IMR-90 (cell line): ENCODE measurements at regions of chr1 and their contacts with region 1.

Region 1: GRCh38 chr1:26169669-26170471 is at the start of gene ZNF593:
- DNase-seq: peak; percentile 90
- ATAC-seq: peak; percentile 96
- H3K4me3 ChIP-seq: peak within 1 kb of the TSS; percentile 84
- H3K27ac ChIP-seq: peak within 1 kb of the TSS; percentile 66
- H3K4me1 ChIP-seq: peaks cover 5% of the 10 kb centered on the region; the same call in 1 of the 2 replicates
- H3K27me3 ChIP-seq: no peaks in the 10 kb centered on the region; the same call in 1 of the 2 replicates
- CTCF ChIP-seq: peak; percentile 98
- POLR2A ChIP-seq: peak; percentile 77
- RAD21 ChIP-seq: peak; percentile 55
- total RNA-seq, gene ZNF593: 22.2 and 22.8 TPM in 2 replicates

Region 2: GRCh38 chr1:26111530-26112406 is 58.1 kb before region 1 on chr1 and contains the start of gene PDIK1L:
- CTCF ChIA-PET with region 1: no interaction called
- POLR2A ChIA-PET with region 1: no interaction called
- dilution Hi-C with region 1: no loop called
- in situ Hi-C with region 1: no loop called
- intact Hi-C with region 1: no loop called
- DNase-seq: peak; percentile 96
- ATAC-seq: peak; percentile 89
- H3K4me3 ChIP-seq: peak within 1 kb of the TSS; percentile 98
- H3K27ac ChIP-seq: peak within 1 kb of the TSS; percentile 82
- H3K4me1 ChIP-seq: no peaks in the 10 kb centered on the region
- H3K27me3 ChIP-seq: no peaks in the 10 kb centered on the region
- CTCF ChIP-seq: no peak
- POLR2A ChIP-seq: no peak
- RAD21 ChIP-seq: no peak
- total RNA-seq, gene PDIK1L: 3.0 and 5.8 TPM in 2 replicates

Region 3: GRCh38 chr1:26132128-26132833 is 37.6 kb before region 1 on chr1:
- CTCF ChIA-PET with region 1: no interaction called
- POLR2A ChIA-PET with region 1: no interaction called
- dilution Hi-C with region 1: no loop called
- in situ Hi-C with region 1: no loop called
- intact Hi-C with region 1: no loop called
- DNase-seq: no peak
- ATAC-seq: no peak
- H3K4me3 ChIP-seq: no peak overlapping the region
- H3K27ac ChIP-seq: no peak overlapping the region
- H3K4me1 ChIP-seq: 0 out of 2 replicates have a peak, but pooled peaks cover under 1% of the 10 kb centered on the region
- H3K27me3 ChIP-seq: peaks cover 11% of the 10 kb centered on the region
- CTCF ChIP-seq: no peak
- POLR2A ChIP-seq: no peak
- RAD21 ChIP-seq: no peak

Region 4: DNA sequence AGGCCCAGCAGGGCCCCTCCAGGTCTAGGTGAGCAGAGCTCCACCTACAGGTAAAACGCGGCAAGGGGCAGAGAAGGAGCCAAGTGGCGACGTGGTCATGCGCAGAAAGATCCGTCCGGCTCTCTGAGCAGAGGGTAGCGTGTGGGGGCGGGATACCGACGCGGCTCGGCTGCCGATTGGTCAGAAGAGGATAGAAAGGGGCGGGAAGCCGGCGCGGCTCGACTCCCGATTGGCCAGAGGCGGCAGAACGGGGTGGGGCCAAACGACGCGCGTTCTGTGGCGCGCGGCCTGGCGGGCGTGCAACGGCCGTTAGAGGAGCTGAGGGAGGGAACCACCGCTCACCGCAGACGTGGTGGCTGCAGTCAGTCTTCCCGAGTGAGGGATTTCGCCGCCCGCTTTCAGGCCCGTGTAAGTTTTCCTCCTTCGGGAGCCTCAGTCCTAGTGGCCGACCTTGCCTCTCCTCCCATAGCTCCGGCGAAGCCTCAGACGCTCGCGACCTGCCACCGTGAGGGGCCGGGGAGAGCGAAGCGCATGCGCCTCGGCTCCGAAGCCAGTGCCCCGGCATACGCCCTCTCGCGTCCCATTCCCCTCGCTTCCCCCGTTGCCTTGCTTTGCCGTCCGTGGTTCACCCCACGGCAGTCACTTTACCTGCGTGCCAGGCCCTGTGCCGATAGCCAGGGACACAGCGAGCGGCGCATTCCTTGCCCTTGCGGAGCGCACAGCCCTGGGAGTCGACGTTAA is 64.2 kb after region 1 on chr1 and contains the start of gene CEP85:
- CTCF ChIA-PET with region 1: interaction called, 8 read pairs
- POLR2A ChIA-PET with region 1: no interaction called
- dilution Hi-C with region 1: no loop called
- in situ Hi-C with region 1: no loop called
- intact Hi-C with region 1: loop called (anchors 5 kb)
- DNase-seq: peak; percentile 96
- ATAC-seq: peak; percentile 98
- H3K4me3 ChIP-seq: peak within 1 kb of the TSS; percentile 86
- H3K27ac ChIP-seq: peak within 1 kb of the TSS; percentile 65
- H3K4me1 ChIP-seq: peaks cover 4% of the 10 kb centered on the region
- H3K27me3 ChIP-seq: no peaks in the 10 kb centered on the region
- CTCF ChIP-seq: peak; percentile 84
- POLR2A ChIP-seq: peak; percentile 35; the same call in 1 of the 2 replicates
- RAD21 ChIP-seq: peak; percentile 57
- total RNA-seq, gene CEP85: 11.1 and 11.5 TPM in 2 replicates